ENCODE measurements at regions of chr2 and their contacts with region 1.

Region 1: DNA sequence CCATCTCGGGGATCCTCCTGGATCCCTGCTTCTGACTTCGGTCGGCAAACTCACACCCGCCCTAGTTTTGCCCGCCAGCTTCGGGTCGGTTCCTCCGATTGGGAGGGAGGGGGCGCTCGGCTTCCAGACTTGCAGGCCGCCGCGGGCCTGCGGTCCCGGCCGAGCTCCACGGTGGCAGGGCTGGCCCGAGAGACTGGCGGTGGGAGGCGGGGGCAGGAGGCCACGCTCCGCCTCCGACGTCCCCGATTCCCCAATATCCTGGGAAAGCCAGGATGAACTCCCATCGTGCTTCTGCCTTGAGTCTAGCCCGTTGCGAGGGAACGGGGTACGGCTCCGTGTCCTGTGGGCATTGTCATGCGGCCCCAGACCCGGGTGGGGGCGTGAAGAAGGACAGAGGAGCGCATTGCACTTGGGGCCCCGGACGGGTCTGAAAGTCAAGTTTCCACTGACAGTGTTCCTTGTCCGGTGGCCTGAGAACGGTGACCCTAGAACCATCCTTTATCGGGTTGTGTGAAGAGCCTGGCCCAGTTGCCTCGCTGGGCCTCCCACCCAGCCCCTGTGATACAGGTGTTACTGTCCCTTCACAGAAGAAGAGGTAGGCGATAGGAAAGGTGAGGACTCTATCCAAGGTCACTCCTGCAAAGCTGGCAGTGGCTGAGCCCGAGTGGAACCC is 2.4 kb upstream of the INHBB start:
- DNase-seq: peak; percentile 80 to 87
- H3K4me3 ChIP-seq: peak overlapping the region; percentile 77; the same call in 1 of the 2 replicates
- H3K27ac ChIP-seq: no peak overlapping the region
- H3K4me1 ChIP-seq: peaks cover 21% of the 10 kb centered on the region
- H3K27me3 ChIP-seq: 0 out of 2 replicates have a peak, but pooled peaks cover 7% of the 10 kb centered on the region
- CTCF ChIP-seq: peak; percentile 96

Region 2: GRCh38 chr2:120223034-120223912 is 120.3 kb before region 1 on chr2 and contains the start of gene TMEM185B:
- CTCF ChIA-PET with region 1: no interaction called
- POLR2A ChIA-PET with region 1: no interaction called
- intact Hi-C with region 1: no loop called
- DNase-seq: peak; percentile 76 to 97
- H3K4me3 ChIP-seq: peak within 1 kb of the TSS; percentile 72
- H3K27ac ChIP-seq: peak within 1 kb of the TSS; percentile 73
- H3K4me1 ChIP-seq: peaks cover 49% of the 10 kb centered on the region
- H3K27me3 ChIP-seq: no peaks in the 10 kb centered on the region
- CTCF ChIP-seq: peak; percentile 59; the same call in 1 of the 2 replicates
- total RNA-seq, gene TMEM185B: 23.5 and 30.3 TPM in 2 replicates

Region 3: GRCh38 chr2:120305296-120305695 is 38.3 kb before region 1 on chr2:
- CTCF ChIA-PET with region 1: no interaction called
- POLR2A ChIA-PET with region 1: no interaction called
- intact Hi-C with region 1: no loop called
- DNase-seq: no peak
- H3K4me3 ChIP-seq: no peak overlapping the region
- H3K27ac ChIP-seq: no peak overlapping the region
- H3K4me1 ChIP-seq: no peaks in the 10 kb centered on the region
- H3K27me3 ChIP-seq: no peaks in the 10 kb centered on the region
- CTCF ChIP-seq: no peak; the same call in 1 of the 2 replicates

Region 4: DNA sequence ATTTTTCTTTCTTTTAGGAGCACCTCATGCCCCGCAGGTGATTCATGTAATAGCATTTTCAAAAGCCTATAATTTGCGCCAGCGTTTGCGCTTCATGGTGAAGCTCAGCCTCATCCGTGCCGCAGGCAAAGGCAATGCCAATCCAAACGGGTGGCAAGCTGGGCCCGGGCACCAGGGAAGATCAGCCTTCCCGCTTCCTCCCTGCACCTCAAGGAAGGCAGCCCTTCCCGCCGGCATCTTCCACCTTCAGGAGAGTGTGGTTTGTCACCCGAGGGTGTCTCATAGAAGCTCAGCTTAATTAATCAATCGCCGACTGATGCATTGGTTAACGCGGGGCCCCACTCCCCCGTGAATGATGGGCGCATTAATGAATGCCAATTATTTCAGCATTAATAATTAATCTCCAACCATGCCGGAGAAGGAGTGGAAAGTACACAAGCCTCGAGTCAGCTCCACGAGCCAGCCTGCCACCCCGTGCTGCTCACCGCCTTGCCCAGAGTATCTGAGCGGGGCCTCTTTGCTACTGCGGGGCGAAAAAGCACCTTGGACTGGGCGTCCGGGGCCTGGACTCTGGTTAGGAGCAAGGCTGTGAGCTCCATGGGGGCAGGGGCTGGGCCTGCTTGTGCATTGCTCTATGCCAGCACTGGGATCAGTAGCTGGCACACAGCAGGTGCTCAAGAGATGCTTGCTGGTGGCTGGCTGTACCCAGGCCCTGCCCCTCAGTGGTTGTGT is 15.3 kb after region 1 on chr2:
- CTCF ChIA-PET with region 1: interaction called, 13 read pairs
- POLR2A ChIA-PET with region 1: no interaction called
- intact Hi-C with region 1: no loop called
- DNase-seq: no peak
- H3K4me3 ChIP-seq: no peak overlapping the region
- H3K27ac ChIP-seq: no peak overlapping the region
- H3K4me1 ChIP-seq: no peaks in the 10 kb centered on the region
- H3K27me3 ChIP-seq: no peaks in the 10 kb centered on the region
- CTCF ChIP-seq: no peak

Region 5: GRCh38 chr2:120373424-120373823 is 29.9 kb after region 1 on chr2:
- CTCF ChIA-PET with region 1: no interaction called
- POLR2A ChIA-PET with region 1: no interaction called
- intact Hi-C with region 1: no loop called
- DNase-seq: no peak
- H3K4me3 ChIP-seq: no peak overlapping the region
- H3K27ac ChIP-seq: no peak overlapping the region
- H3K4me1 ChIP-seq: peaks cover 5% of the 10 kb centered on the region
- H3K27me3 ChIP-seq: 0 out of 2 replicates have a peak, but pooled peaks cover 4% of the 10 kb centered on the region
- CTCF ChIP-seq: no peak

Region 6: DNA sequence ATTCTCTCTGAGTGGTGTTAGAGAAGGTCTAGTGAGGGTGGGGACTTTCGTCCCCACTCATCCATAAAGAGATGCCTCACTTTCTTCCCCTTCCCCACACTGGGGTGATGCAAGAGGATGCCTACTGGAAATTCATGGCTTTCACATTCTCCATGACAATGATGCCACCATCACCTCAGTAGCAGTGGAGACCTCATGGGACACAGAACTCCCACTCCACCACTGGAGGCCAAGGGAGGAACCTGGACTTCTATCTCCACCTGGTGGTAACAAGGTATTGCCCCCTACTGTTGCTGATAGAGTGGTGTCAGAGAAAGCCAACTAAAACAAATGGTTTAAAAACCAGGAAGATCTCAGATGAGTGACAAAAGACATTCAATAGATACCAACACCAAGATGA is 113.3 kb after region 1 on chr2:
- CTCF ChIA-PET with region 1: no interaction called
- POLR2A ChIA-PET with region 1: no interaction called
- intact Hi-C with region 1: loop called (anchors 1 kb)
- DNase-seq: peak in 1 of 2 experiments; percentile 52
- H3K4me3 ChIP-seq: no peak overlapping the region
- H3K27ac ChIP-seq: no peak overlapping the region
- H3K4me1 ChIP-seq: peaks cover 8% of the 10 kb centered on the region; the same call in 1 of the 2 replicates
- H3K27me3 ChIP-seq: no peaks in the 10 kb centered on the region
- CTCF ChIP-seq: peak; percentile 65

Region 7: GRCh38 chr2:120470041-120470965 is 126.7 kb after region 1 on chr2:
- CTCF ChIA-PET with region 1: no interaction called
- POLR2A ChIA-PET with region 1: no interaction called
- intact Hi-C with region 1: no loop called
- DNase-seq: peak; percentile 84 to 97
- H3K4me3 ChIP-seq: no peak overlapping the region
- H3K27ac ChIP-seq: peak overlapping the region; percentile 51
- H3K4me1 ChIP-seq: peaks cover 44% of the 10 kb centered on the region
- H3K27me3 ChIP-seq: no peaks in the 10 kb centered on the region
- CTCF ChIP-seq: no peak

Region 8: GRCh38 chr2:120552800-120553481 is 209.4 kb after region 1 on chr2:
- CTCF ChIA-PET with region 1: interaction called, 10 read pairs
- POLR2A ChIA-PET with region 1: no interaction called
- intact Hi-C with region 1: loop called (anchors 1 kb)
- DNase-seq: peak; percentile 90 to 97
- H3K4me3 ChIP-seq: peak overlapping the region; percentile 5; the same call in 1 of the 2 replicates
- H3K27ac ChIP-seq: peak overlapping the region; percentile 38
- H3K4me1 ChIP-seq: peaks cover 36% of the 10 kb centered on the region
- H3K27me3 ChIP-seq: no peaks in the 10 kb centered on the region
- CTCF ChIP-seq: peak; percentile 95

Region 9: GRCh38 chr2:121228521-121228920 is 885.0 kb after region 1 on chr2:
- CTCF ChIA-PET with region 1: no interaction called
- POLR2A ChIA-PET with region 1: interaction called, 12 read pairs
- intact Hi-C with region 1: no loop called
- DNase-seq: no peak
- H3K4me3 ChIP-seq: no peak overlapping the region
- H3K27ac ChIP-seq: no peak overlapping the region
- H3K4me1 ChIP-seq: no peaks in the 10 kb centered on the region
- H3K27me3 ChIP-seq: no peaks in the 10 kb centered on the region
- CTCF ChIP-seq: no peak